Cardiac septum (tissue), 1 donor: ENCODE measurements at regions of chr1 and their contacts with region 1.

Region 1: GRCh38 chr1:60969971-60970509 is 112.3 kb upstream of the NFIA start:
- DNase-seq: no peak

Region 2: GRCh38 chr1:61043010-61043820 is 73.2 kb after region 1 on chr1:
- intact Hi-C with region 1: loop called (anchors 2 kb)
- DNase-seq: peak; percentile 94

Region 3: GRCh38 chr1:61588736-61589672 is 619.0 kb after region 1 on chr1:
- intact Hi-C with region 1: loop called (anchors 5 kb)
- DNase-seq: no peak

Region 4: GRCh38 chr1:61641578-61642336 is 671.7 kb after region 1 on chr1:
- intact Hi-C with region 1: loop called (anchors 5 kb)
- DNase-seq: peak; percentile 90

Region 5: GRCh38 chr1:61851849-61852669 is 882.0 kb after region 1 on chr1:
- intact Hi-C with region 1: loop called (anchors 5 kb)
- DNase-seq: no peak